ENCODE measurements at regions of chr17 and their contacts with region 1.

Region 1: DNA sequence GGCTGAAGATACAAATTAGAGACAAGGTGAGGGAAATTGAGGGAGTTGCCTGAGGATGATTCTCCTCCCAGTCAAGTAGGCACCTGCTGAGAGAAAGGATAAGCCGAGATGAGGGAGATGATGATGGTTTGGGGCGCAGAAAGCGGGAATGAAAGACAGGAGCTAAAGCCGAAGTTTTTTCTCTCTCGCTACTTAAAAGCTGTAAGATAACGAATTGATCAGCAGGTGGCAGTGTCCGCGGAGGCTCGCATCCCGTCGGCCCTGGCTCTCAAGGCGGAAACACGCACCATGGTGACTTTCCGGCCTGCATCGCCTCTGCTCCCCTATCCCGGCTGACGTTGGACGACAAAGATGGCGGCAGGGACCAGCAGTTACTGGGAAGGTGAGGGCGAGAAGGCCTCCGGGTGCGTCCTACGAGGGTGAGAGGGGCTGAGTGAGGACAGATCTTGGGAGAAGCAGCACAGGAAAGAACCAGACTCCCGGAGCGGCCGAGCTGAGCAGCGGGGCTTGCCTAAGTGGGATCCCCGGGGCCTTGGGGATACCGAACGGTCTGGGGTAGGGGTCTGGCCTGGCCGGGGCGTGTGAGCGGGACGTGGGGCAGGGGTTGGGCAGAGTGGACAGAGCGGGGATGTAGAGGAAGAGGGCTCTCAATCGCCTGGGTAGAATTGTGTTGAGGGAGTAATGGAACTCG is at the start of gene GOSR1:
- DNase-seq: peak; percentile 68 to 96
- H3K4me3 ChIP-seq: peak within 1 kb of the TSS; percentile 78 to 92
- H3K27ac ChIP-seq: peak within 1 kb of the TSS; percentile 94 to 95
- H3K4me1 ChIP-seq: peaks cover 4 to 8% of the 10 kb centered on the region in 2 donors
- H3K27me3 ChIP-seq: no peaks in the 10 kb centered on the region
- CTCF ChIP-seq: peak; percentile 66 to 84 (median 72)
- total RNA-seq, gene GOSR1: 33.0 TPM

Region 2: DNA sequence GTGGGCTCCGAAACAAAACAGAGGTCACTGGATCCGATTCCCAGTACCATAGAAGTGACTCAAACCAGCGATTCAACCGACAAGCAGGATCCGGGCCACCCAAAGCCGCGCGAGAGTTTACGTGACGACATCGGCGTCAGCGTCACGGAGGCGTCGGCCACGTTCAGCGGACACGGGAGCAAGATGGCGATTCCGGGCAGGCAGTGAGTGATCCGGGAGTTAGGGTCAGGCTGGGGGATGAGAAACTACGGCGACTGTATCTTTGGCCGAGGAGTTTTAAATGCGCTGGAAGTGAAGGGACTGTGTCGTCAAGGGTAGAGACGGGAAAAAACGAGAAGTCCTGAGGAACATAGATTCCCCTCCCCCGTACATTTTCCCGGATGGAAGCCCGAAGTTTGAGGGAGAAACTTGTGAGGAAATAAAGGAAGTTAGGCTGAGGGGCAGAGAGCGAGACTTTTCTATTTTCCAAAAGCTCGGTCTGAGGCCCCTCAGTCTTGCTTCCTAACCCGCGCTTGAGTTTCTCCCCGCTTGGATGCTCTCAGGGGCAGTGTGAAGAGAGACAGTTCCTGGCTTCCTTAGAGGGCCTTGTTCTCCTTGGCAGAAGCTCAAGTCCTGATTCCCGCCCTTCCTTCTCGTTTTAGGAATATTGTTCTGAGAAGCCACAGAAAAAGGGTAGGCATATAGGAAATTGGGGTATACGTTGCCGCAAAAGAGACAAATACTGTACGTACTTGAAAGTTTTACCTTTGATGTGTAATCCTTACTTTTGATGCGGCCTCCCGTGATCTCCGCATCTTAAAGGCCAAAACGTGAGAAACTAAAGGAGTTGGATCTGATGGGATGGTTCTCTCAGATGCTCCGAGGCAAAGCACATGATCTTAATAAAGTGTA is 360.3 kb before region 1 on chr17 and contains the start of gene NSRP1:
- intact Hi-C with region 1: loop called (anchors 10 kb)
- DNase-seq: peak; percentile 82 to 98
- H3K4me3 ChIP-seq: peak within 1 kb of the TSS; percentile 65 to 71
- H3K27ac ChIP-seq: peak within 1 kb of the TSS; percentile 92 to 95
- H3K4me1 ChIP-seq: peaks cover 0 to 12% of the 10 kb centered on the region in 2 donors
- H3K27me3 ChIP-seq: no peaks in the 10 kb centered on the region
- CTCF ChIP-seq: no peak
- total RNA-seq, gene NSRP1: 5.1 TPM

Region 3: DNA sequence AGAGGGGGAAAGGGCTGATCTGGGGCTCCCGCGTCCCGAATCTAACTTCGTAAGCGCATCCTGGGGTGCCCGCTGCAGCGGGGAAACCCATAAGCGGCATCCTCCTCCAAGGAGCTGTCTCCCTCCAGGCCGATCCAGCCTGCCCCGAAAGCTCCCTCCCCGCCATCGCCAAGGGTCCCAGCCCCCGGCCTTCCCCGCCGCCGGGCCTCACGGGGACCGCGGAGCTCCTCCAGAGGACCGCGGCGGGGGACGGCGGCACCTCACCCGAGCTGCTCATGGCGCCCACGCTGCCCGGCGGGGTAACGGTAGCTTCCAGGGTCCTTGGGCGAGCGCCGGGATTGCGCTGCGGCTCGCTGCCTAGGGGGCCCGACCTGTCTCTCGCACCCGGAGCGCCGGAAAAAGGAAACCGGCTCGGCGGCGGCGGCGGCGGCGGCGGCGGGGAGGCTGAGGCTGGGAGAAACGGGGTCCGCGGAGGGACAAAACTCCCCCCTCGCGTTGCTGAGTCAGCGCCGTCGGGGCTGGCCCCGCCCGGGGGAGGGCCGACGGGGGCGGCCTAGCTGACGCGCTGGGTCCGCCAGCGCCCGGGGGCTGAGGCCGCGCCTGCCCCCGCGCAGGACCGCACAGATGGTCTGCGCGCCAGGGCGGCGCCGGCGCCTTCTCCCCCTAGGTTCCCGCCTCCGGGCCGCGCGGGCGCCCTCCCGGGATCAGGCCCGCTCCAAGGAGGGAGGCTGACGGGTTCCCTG is 185.5 kb before region 1 on chr17 and contains the start of gene BLMH:
- intact Hi-C with region 1: loop called (anchors 5 kb)
- DNase-seq: peak in 1 of 2 donors; percentile 89
- H3K4me3 ChIP-seq: peak within 1 kb of the TSS; percentile 86
- H3K27ac ChIP-seq: peak within 1 kb of the TSS; percentile 91 to 96
- H3K4me1 ChIP-seq: peaks cover 2 to 19% of the 10 kb centered on the region in 2 donors
- H3K27me3 ChIP-seq: no peaks in the 10 kb centered on the region
- CTCF ChIP-seq: no peak
- total RNA-seq, gene BLMH: 6.9 TPM

Region 4: DNA sequence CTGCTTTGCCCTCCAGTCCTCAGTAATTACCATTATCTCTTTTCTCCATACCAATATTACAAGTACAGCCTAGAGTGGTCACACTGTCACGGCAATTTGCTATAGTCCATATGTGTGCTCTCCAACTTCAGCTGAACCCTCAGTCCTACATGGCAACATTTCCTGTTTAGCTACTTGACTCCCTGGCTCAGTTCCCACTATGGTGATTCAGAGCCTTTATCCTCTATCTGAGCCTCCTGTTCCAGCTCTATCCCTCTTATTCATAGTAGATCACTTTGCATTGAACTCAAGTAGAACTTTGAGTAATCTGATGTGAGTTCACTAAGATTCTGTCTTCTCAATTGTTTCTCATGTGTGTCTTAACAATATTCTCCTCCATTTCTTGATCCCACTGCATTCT is 43.7 kb before region 1 on chr17:
- intact Hi-C with region 1: loop called (anchors 5 kb)
- DNase-seq: no peak
- H3K4me3 ChIP-seq: no peak overlapping the region
- H3K27ac ChIP-seq: no peak overlapping the region
- H3K4me1 ChIP-seq: peaks cover 3 to 13% of the 10 kb centered on the region in 2 donors
- H3K27me3 ChIP-seq: no peaks in the 10 kb centered on the region
- CTCF ChIP-seq: no peak

Region 5: DNA sequence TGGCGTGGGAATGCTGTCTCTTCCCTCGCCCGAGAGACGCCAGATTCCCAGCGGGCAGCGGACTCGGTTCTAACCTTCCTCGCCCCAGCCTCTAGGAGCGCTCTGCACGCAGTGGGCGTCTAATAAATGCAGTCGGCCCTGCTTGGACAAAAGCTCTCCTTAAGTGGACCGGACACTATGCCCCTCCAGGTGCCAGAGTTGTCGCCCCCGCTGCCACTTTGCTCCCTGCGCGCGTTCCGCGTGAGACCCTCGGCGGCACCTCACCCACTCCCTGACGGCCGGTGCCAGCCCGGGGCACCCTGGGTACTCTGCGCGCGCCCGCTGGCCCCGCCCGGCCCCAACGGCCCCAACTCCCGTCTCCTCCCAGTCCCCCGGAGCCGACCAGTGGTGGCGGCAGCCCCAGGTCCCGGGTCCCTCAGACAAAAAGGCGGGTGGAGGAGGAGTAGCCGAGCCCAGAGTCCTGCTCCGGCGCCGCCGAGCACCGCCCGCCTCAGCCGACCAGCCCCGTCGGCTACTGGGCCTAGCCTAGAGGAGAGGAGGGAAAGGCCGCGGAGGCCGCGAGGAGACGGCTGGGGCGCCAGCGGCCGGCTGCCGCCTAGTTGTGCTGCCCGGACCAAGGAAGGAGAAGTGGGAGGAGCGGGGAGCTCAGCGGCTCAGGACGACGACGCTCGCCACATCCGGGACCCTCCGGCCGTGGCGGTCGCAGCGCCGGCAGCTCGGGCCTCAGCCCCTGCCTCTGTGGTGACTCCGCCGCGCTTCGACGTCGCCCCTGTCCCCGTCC is 123.0 kb after region 1 on chr17:
- intact Hi-C with region 1: loop called (anchors 1 kb)
- DNase-seq: peak; percentile 29 to 87
- H3K4me3 ChIP-seq: peak overlapping the region; percentile 71 to 99
- H3K27ac ChIP-seq: peak overlapping the region; percentile 88 to 98
- H3K4me1 ChIP-seq: peaks cover 0 to 6% of the 10 kb centered on the region in 2 donors
- H3K27me3 ChIP-seq: no peaks in the 10 kb centered on the region
- CTCF ChIP-seq: peak; percentile 38 to 47 (median 42)

Measured in ascending aorta (tissue), 2 donors.